BJ (cell line): ENCODE measurements at regions of chr4 and their contacts with region 1.

Region 1: DNA sequence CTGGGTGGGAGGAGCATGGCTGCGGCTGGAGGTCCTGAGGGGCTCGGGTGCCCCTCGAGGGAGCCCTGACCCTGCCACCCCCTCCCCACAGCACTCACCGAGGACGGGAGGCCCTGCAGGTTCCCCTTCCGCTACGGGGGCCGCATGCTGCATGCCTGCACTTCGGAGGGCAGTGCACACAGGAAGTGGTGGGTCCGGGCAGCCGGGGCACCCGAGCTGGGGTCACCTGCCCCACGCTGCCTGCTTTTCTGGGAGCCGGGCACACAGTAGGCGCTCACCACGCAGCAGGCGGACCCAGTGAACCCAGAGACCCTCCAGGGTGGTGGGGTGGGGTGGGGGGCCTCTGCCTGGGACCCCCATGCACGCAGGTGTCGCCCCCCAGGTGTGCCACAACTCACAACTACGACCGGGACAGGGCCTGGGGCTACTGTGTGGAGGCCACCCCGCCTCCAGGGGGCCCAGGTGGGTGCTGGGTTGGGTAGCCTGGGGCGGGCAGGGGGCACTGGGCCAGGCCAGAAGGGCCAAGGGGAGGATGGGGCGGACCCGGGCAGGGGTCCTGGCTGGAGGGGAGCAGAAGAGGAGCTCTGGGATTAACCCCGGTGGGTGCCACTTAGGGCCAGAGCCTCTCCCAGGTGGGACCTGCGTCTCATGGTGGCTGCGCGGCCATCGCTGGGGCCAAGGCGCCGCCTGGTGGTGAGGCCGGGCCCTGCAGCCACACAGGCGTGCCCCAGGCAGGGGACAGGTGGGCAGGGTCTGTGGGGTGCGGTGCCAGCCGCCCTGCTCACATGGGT is 1.4 kb downstream of the HGFAC start:
- DNase-seq: no peak
- H3K4me3 ChIP-seq: no peak overlapping the region
- H3K27me3 ChIP-seq: no peaks in the 10 kb centered on the region
- CTCF ChIP-seq: peak; percentile 98

Region 2: GRCh38 chr4:3305598-3306371 is 137.4 kb before region 1 on chr4:
- CTCF ChIA-PET with region 1: interaction called, 11 read pairs
- POLR2A ChIA-PET with region 1: no interaction called
- DNase-seq: no peak
- H3K4me3 ChIP-seq: no peak overlapping the region
- H3K27me3 ChIP-seq: no peaks in the 10 kb centered on the region
- CTCF ChIP-seq: no peak

Region 3: GRCh38 chr4:3346146-3346545 is 97.0 kb before region 1 on chr4:
- CTCF ChIA-PET with region 1: interaction called, 154 read pairs
- POLR2A ChIA-PET with region 1: no interaction called
- DNase-seq: peak; percentile 35
- H3K4me3 ChIP-seq: no peak overlapping the region
- H3K27me3 ChIP-seq: no peaks in the 10 kb centered on the region
- CTCF ChIP-seq: peak; percentile 86

Region 4: DNA sequence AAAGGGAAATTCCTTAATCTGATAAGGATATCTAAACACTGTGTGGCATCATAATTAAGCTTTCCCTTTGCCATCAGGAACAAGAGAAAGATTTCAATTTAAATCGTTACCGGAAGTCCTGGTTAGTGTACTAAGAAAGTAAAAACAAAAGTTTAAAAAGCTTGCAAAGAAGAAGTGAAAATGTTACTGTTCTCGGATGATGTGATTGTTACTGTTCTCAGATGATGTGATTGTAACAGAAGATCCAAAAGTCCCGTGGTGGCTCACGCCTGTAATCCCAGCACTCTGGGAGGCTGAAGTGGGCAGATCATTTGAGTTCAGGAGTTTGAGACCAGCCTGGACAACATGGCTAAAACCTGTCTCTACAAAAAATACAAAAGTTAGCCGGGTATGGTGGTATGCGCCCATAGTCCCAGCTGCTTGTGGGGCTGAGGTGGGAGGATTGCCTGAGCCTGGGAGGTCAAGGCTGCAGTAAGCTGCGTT is 87.8 kb before region 1 on chr4:
- CTCF ChIA-PET with region 1: interaction called, 11 read pairs
- POLR2A ChIA-PET with region 1: no interaction called
- DNase-seq: no peak
- H3K4me3 ChIP-seq: no peak overlapping the region
- H3K27me3 ChIP-seq: no peaks in the 10 kb centered on the region
- CTCF ChIP-seq: no peak

Region 5: GRCh38 chr4:3462321-3462789 is 19.2 kb after region 1 on chr4:
- CTCF ChIA-PET with region 1: no interaction called
- POLR2A ChIA-PET with region 1: no interaction called
- DNase-seq: no peak
- H3K4me3 ChIP-seq: no peak overlapping the region
- H3K27me3 ChIP-seq: peaks cover 36% of the 10 kb centered on the region
- CTCF ChIP-seq: no peak